ENCODE measurements at regions of chr14 and their contacts with region 1.

Region 1: DNA sequence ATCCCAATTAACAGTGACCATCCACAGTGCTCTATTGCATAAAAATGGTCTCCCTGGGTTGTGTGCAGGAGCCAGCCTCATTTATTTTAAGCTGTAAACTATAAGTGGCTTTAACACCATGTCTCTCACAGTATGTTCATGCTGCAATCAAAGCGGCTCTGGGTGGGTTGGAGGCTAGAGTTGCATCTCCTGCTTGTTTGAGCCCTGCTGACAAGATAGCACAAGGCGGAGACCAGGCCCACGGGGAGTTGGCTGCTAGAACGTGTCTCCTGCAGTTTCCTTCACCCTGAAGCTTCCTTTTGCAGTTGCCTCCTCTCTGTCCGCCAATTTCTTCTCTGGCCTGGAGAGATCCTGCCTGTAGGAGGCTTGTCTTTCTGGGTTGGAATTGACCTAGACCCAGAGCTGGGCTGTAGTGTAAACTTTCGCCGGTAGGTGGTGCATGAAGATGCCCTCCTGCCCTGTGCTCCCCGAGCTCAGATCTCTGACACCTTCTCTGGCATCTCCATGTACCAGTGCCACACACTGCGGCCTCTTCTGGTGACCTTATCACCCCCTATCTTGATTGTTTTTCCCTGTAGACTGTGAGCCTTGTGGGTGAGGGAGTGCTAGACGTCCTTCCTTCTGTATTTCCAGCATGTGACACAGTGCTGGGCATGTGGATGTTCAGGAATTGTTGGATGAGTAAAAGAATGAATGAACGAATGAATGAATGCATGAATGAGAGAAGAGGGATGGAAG is 10.3 kb downstream of the OTUB2 start:
- DNase-seq: peak; percentile 70 to 79
- H3K4me3 ChIP-seq: no peak overlapping the region
- H3K4me3 Mint-ChIP-seq: no peak overlapping the region
- H3K27ac Mint-ChIP-seq: no peak overlapping the region
- H3K4me1 ChIP-seq: no peaks in the 10 kb centered on the region
- H3K4me1 Mint-ChIP-seq: peaks cover 4% of the 10 kb centered on the region
- H3K27me3 ChIP-seq: no peaks in the 10 kb centered on the region
- H3K27me3 Mint-ChIP-seq: no peaks in the 10 kb centered on the region
- CTCF ChIP-seq: peak; percentile 72 to 79

Region 2: GRCh38 chr14:93970549-93970946 is 65.9 kb before region 1 on chr14:
- CTCF ChIA-PET with region 1: no interaction called
- POLR2A ChIA-PET with region 1: no interaction called
- intact Hi-C with region 1: no loop called
- DNase-seq: peak in 1 of 2 experiments; percentile 20
- H3K4me3 ChIP-seq: no peak overlapping the region
- H3K4me3 Mint-ChIP-seq: no peak overlapping the region
- H3K27ac Mint-ChIP-seq: no peak overlapping the region
- H3K4me1 ChIP-seq: peaks cover 6% of the 10 kb centered on the region; the same call in 1 of the 2 replicates
- H3K4me1 Mint-ChIP-seq: no peaks in the 10 kb centered on the region
- H3K27me3 ChIP-seq: no peaks in the 10 kb centered on the region
- H3K27me3 Mint-ChIP-seq: no peaks in the 10 kb centered on the region
- CTCF ChIP-seq: peak in 1 of 2 experiments; percentile 30

Region 3: DNA sequence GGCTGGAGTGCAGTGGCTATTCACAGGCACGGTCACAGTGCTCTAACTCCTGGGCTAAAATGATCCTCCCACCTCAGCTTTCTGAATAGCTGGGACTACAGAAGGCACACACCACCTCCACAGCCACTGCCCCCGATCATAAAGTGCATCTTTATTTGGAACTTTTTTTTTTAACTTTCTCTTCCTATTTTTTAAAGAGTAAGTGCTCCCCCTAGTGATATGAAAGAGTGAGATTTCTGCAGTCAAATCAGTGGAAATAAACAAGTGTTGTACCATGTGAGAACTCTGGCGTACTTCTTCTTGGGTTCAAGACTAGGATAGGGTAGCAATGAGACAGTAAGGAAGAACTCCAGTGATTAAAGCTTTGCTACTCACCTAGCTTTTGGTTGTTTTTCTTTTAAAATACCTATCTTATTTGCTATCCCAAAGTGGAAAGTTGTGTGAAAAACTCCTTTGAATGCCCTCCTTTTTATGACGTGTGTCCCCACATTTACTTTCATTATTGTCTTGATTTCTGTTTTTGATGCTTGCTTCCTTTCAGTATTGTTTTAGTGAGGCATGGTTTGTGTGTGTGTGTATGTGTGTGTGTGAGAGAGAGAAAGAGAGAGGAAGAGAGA is 144.3 kb after region 1 on chr14:
- CTCF ChIA-PET with region 1: interaction called, 3 read pairs
- POLR2A ChIA-PET with region 1: no interaction called
- intact Hi-C with region 1: loop called (anchors 1 kb)
- DNase-seq: peak in 1 of 2 experiments; percentile 30
- H3K4me3 ChIP-seq: no peak overlapping the region
- H3K4me3 Mint-ChIP-seq: no peak overlapping the region
- H3K27ac Mint-ChIP-seq: no peak overlapping the region
- H3K4me1 ChIP-seq: no peaks in the 10 kb centered on the region
- H3K4me1 Mint-ChIP-seq: no peaks in the 10 kb centered on the region
- H3K27me3 ChIP-seq: no peaks in the 10 kb centered on the region
- H3K27me3 Mint-ChIP-seq: peaks cover 25% of the 10 kb centered on the region
- CTCF ChIP-seq: peak; percentile 22 to 59

Region 4: DNA sequence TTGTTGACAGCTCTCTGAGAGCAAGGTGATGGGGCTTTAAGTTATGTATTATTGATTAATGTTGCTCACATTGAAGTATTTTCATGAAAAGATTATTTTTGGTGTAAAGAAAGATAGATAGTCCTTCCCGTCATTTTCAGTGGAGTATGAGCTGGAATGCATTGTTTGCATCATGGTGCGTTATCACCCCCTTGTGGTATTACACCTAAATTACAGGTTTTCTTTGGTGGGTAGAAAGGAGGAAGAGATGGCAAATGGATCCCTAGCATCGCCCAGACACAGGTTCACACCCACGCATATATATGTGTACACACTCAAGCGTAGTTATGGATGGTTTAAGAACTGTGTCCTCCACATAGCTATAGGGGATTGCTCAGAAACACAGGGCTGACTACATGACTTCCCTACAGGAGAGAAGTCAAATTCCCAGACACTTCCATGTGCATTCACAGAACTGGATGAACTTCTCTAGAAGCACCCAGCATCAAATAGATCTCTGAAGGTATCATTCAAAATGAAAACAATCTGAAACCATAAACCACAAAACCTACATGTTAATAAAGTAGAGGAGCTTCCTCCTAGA is 271.0 kb after region 1 on chr14:
- CTCF ChIA-PET with region 1: no interaction called
- POLR2A ChIA-PET with region 1: no interaction called
- intact Hi-C with region 1: loop called (anchors 10 kb)
- DNase-seq: peak in 1 of 2 experiments; percentile 53
- H3K4me3 ChIP-seq: no peak overlapping the region
- H3K4me3 Mint-ChIP-seq: no peak overlapping the region
- H3K27ac Mint-ChIP-seq: no peak overlapping the region
- H3K4me1 ChIP-seq: no peaks in the 10 kb centered on the region; the same call in 1 of the 2 replicates
- H3K4me1 Mint-ChIP-seq: no peaks in the 10 kb centered on the region
- H3K27me3 ChIP-seq: no peaks in the 10 kb centered on the region
- H3K27me3 Mint-ChIP-seq: no peaks in the 10 kb centered on the region
- CTCF ChIP-seq: peak in 1 of 2 experiments; percentile 45